Activated CD4-positive, alpha-beta T cell treated with anti-CD3 and anti-CD28 coated beads, Interleukin-2, amount 10 ng/mL, durations not matched to agents 24 days and 14 days (primary cell): ENCODE measurements at regions of chrX and their contacts with region 1.

Region 1: GRCh38 chrX:134764212-134764785 is 106.0 kb upstream of the PLAC1 start:
- DNase-seq: peak; percentile 57
- H3K4me3 Mint-ChIP-seq: no peak overlapping the region
- H3K27ac Mint-ChIP-seq: no peak overlapping the region
- H3K4me1 Mint-ChIP-seq: peaks cover 2% of the 10 kb centered on the region
- H3K27me3 Mint-ChIP-seq: no peaks in the 10 kb centered on the region

Region 2: DNA sequence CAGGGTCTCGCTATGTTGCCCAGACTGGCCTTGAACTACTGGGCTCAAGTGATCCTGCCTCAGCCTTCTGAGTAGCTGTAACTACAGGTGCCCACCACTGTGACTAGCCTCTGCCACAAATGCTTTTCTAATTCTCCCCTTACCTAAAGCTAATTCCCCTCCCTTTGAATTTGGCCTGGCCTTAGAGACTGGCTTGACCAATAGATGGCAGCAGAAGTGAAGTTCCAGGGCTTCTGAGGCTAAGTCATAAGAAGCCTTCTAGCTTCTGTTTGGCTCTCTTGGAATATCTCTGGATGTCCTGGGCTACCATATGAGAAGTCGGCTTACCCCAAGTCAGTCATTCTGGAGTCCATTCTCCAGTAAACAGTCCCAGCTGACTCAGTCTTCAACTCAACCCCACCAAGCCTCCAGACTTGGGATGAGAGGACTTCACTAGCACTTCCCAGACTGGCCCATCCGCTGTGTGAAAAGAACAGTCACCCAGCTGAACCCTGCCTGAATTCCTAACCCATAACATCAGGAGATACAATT is 243.4 kb before region 1 on chrX:
- intact Hi-C with region 1: loop called (anchors 5 kb)
- DNase-seq: peak; percentile 64
- H3K4me3 Mint-ChIP-seq: no peak overlapping the region
- H3K27ac Mint-ChIP-seq: no peak overlapping the region
- H3K4me1 Mint-ChIP-seq: peaks cover 10% of the 10 kb centered on the region
- H3K27me3 Mint-ChIP-seq: no peaks in the 10 kb centered on the region

Region 3: DNA sequence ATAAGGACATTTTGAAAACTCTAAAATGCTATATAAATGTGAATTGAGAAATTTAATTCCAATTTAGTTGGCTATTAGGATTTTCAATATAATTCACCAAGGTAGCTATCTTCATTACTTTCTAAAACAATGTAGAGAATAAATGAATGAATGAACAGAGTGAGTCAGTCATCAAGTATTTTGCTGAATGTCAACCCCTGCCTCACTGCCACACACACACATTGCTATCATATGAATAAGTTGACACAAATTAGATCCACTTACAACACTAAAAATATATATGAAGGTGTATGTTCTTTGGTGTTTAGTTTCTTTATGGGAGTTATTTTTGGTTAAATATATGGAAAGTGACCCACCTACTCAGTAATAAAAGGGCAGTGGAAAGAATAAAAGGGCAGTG is 85.1 kb after region 1 on chrX:
- intact Hi-C with region 1: no loop called
- DNase-seq: no peak
- H3K4me3 Mint-ChIP-seq: no peak overlapping the region
- H3K27ac Mint-ChIP-seq: no peak overlapping the region
- H3K4me1 Mint-ChIP-seq: no peaks in the 10 kb centered on the region
- H3K27me3 Mint-ChIP-seq: no peaks in the 10 kb centered on the region